T-cell (primary cell): ENCODE measurements at regions of chr3 and their contacts with region 1.

Region 1: DNA sequence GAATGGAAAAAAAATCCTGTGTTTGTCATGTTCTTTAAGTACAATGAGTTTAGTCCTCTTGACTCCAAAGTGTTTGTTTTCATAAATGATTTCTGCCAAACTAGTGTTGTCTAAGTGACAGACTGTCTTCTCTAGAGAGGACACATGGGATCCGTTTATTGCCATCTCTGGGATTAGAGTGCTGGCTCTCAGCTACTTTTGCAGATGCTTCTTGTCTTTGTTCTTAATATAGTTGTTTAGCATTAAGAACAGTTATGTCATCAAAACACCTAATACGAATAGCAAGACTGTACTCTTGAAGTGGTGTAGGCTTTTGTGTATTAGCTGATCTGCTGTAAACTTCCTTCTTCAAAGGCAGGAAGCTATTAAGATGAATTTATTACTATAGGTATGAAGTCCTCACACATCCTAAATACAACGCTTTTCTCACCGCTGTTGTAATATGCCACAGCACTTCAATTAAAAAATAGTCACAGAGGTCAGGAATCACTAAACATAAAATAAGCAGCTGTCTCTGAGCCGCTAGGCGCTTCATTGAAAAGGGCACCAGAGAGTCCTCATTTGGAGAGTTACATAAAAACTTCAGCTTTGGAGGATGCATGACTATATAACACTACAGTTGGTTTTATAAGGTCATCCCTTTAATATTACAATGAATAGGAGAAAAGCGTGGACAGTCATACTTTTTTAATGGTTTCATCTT is 128.3 kb upstream of the ZNF385D start:
- DNase-seq: no peak
- ATAC-seq: no peak
- H3K4me3 ChIP-seq: no peak overlapping the region
- H3K4me3 Mint-ChIP-seq: no peak overlapping the region
- H3K27ac ChIP-seq: no peak overlapping the region
- H3K27ac Mint-ChIP-seq: no peak overlapping the region
- H3K4me1 ChIP-seq: no peaks in the 10 kb centered on the region
- H3K4me1 Mint-ChIP-seq: no peaks in the 10 kb centered on the region
- H3K27me3 ChIP-seq: no peaks in the 10 kb centered on the region
- H3K27me3 Mint-ChIP-seq: no peaks in the 10 kb centered on the region

Region 2: GRCh38 chr3:21901484-21901883 is 22.1 kb after region 1 on chr3:
- CTCF ChIA-PET with region 1: interaction called in 1 of 2 experiments, 12 read pairs
- POLR2A ChIA-PET with region 1: no interaction called
- DNase-seq: no peak
- ATAC-seq: no peak
- H3K4me3 ChIP-seq: no peak overlapping the region
- H3K4me3 Mint-ChIP-seq: no peak overlapping the region
- H3K27ac ChIP-seq: no peak overlapping the region
- H3K27ac Mint-ChIP-seq: no peak overlapping the region
- H3K4me1 ChIP-seq: no peaks in the 10 kb centered on the region
- H3K4me1 Mint-ChIP-seq: no peaks in the 10 kb centered on the region
- H3K27me3 ChIP-seq: no peaks in the 10 kb centered on the region
- H3K27me3 Mint-ChIP-seq: no peaks in the 10 kb centered on the region